ENCODE measurements at regions of chr3 and their contacts with region 1.

Region 1: DNA sequence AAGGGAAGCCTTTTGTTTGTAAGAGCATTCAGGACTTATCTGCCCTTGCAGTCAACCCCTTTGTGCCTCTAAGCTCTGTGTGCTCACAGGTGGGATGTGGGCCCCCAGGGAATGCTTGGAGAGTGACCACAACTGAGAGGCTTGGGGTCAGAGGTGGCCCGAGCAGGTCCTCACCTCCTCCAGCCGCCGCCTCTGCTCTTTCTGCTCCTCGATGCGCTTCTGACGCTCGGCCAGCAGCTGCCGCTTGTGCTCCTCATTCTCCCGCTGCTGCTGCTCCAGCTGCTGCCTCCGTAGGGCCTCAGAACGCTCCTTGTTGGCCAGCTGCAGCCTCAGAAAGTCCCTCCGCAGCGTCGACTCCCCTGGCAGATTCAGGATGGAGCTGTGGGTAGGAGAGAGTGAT is 130.8 kb upstream of the SLC2A2 start:
- DNase-seq: no peak
- ATAC-seq: no peak
- H3K4me3 ChIP-seq: no peak overlapping the region
- H3K4me3 Mint-ChIP-seq: no peak overlapping the region
- H3K27ac ChIP-seq: no peak overlapping the region
- H3K27ac Mint-ChIP-seq: no peak overlapping the region
- H3K4me1 ChIP-seq: no peaks in the 10 kb centered on the region
- H3K4me1 Mint-ChIP-seq: no peaks in the 10 kb centered on the region
- H3K27me3 ChIP-seq: no peaks in the 10 kb centered on the region
- H3K27me3 Mint-ChIP-seq: no peaks in the 10 kb centered on the region
- CTCF ChIP-seq: no peak

Region 2: GRCh38 chr3:171028025-171028778 is 129.1 kb before region 1 on chr3:
- CTCF ChIA-PET with region 1: no interaction called
- POLR2A ChIA-PET with region 1: no interaction called
- intact Hi-C with region 1: no loop called
- DNase-seq: peak in 5 of 9 experiments; percentile 5 to 49 (median 23)
- ATAC-seq: peak; percentile 40
- H3K4me3 ChIP-seq: peak overlapping the region; percentile 10 to 39
- H3K4me3 Mint-ChIP-seq: no peak overlapping the region
- H3K27ac ChIP-seq: no peak overlapping the region
- H3K27ac Mint-ChIP-seq: no peak overlapping the region
- H3K4me1 ChIP-seq: no peaks in the 10 kb centered on the region
- H3K4me1 Mint-ChIP-seq: no peaks in the 10 kb centered on the region
- H3K27me3 ChIP-seq: peaks cover 0 to 2% of the 10 kb centered on the region in 2 experiments
- H3K27me3 Mint-ChIP-seq: peaks cover 15% of the 10 kb centered on the region
- CTCF ChIP-seq: no peak

Region 3: DNA sequence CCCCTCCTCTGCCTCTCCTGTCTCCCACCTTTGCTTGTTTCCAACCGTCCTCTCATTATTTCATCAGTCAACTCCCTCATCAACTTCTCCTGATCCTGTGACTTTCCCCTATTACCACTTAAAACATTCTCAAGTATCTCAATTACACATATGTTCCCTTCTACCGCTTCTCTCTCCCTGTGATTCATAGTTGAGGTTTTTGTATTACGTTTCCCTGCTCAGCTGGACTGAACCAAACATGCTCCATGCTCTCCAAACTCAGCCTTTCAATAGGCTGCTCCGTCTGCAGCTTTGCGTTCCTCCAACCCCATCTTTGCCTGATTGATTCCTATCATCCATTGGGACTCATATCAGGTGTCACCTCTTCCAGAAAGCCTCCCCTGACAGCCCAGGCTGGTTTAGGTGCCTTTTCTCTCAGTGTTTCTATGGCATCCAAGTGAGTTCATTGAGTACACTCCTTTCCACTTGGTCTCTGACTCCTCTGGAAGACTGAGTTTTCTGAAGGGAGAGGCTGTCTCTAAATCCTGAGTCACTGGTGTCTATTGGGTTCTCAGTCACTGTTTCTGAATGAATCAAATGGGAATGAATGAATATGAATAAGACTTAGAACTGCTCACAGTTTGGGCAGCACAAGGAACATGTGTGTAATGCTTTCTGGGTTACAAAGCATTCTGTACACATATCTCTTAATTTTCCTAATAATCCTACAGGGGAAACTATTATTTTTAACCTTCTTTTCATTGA is 596.6 kb after region 1 on chr3:
- CTCF ChIA-PET with region 1: no interaction called
- POLR2A ChIA-PET with region 1: no interaction called
- intact Hi-C with region 1: loop called in 1 of 2 experiments (anchors 10 kb)
- DNase-seq: no peak
- ATAC-seq: no peak
- H3K4me3 ChIP-seq: no peak overlapping the region
- H3K4me3 Mint-ChIP-seq: no peak overlapping the region
- H3K27ac ChIP-seq: no peak overlapping the region
- H3K27ac Mint-ChIP-seq: no peak overlapping the region
- H3K4me1 ChIP-seq: no peaks in the 10 kb centered on the region
- H3K4me1 Mint-ChIP-seq: no peaks in the 10 kb centered on the region
- H3K27me3 ChIP-seq: peaks cover 0 to 8% of the 10 kb centered on the region in 2 experiments
- H3K27me3 Mint-ChIP-seq: peaks cover 9% of the 10 kb centered on the region
- CTCF ChIP-seq: no peak